Right ventricle myocardium inferior (tissue), 1 donor: ENCODE measurements at regions of chr3 and their contacts with region 1.

Region 1: GRCh38 chr3:72996473-72997333 is at the start of gene PPP4R2:
- DNase-seq: peak; percentile 95
- ATAC-seq: peak; percentile 97
- total RNA-seq, gene PPP4R2: 52.8 TPM

Region 2: GRCh38 chr3:72847751-72848702 is 148.7 kb before region 1 on chr3 and contains the start of gene SHQ1:
- intact Hi-C with region 1: loop called (anchors 5 kb)
- DNase-seq: peak; percentile 98
- ATAC-seq: peak; percentile 97
- total RNA-seq, gene SHQ1: 13.8 TPM

Region 3: DNA sequence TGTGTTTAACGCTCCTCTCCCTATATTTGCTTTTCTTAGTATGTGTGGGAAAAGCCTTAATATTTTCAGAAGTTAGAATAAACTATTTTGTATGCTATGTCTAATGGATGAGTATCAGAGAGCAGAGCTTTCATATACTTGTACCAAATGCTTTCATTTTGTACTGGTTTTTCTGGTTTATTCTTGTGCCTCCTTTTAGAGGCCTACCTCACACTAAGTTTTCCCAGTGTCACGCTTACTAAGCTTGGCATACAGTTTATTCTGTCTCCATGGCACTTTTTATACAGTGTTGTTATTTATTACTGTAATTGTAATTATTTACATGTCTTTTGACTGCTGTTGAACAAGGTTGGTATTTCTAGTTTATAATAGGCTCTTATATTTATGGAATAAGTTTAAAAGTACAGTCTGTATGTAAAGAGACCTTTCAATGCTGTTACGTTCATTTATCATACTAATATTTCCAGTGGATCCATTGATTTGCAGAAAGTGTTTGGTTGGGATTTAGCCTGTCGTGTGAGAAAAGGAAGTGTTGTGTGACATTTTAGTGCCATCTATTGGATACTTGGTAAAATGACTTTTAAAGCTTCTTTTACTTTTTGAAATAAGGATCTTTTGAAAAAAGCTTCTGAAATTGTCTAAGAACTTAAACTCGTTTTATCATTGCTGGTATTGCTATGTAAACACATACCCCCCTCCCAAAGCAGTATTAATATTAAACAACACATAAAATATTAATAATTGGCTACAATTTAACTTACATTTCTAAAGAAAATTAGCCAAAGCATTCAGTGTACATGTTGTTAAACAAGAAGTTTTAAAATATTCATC is 59.5 kb after region 1 on chr3:
- intact Hi-C with region 1: loop called (anchors 2 kb)
- DNase-seq: no peak
- ATAC-seq: peak; percentile 61